ENCODE measurements at regions of chr20 and their contacts with region 1.

Region 1: DNA sequence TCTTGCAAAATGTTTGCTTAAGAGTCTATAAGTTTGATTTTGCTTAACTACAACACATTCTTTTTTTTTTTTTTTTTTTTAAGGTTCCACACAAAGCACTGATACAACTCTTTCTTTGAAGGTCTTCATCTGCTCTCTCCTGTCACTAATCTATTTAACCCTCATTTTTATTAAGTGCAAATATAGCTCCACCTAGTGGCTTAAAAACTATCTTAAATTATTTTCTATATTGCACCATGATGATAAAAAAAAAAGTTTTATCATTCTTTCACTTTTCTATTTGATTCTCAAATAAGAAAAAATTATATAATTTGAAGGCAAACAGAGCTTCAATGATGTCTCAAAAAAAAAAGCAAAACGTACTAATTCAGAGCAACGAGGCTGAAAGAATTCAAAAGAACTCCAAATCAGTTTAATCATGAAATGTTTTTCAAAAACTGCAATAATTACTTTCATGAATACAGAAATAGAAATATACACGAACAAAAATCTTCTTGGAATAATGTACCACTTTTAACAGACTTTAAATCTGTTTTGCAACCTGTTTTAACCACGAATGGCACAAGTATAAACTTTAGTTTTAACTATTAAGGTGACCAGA is 12.8 kb downstream of the ESF1 start:
- DNase-seq: no peak
- ATAC-seq: no peak

Region 2: DNA sequence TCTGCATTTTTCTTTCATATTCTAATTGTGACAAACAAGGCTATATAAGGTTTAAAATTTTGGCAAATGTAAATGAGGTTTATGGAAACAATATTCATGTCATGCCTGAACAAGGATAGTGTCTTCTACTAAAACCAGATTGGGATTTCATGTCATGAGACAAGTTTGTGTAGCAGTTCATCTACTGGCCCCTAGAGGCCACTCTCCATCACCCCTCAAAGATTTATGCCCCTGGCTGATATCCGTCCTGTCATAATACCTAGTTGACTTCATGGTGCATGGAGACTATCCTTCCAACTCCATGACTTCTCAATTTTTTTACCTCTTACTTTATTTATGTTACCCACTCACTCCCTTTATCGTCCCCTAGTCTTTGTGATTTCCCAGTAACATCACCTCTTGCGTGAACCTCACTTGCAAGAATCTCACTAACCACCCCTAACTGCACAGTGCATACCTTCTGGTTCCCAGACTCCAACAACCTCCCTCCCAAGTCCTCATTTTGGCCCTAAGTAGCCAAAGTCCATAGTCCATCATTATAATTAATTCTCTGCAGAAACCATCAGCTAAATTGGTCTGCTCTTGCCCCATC is 313.0 kb before region 1 on chr20:
- intact Hi-C with region 1: loop called (anchors 5 kb)
- DNase-seq: no peak
- ATAC-seq: peak; percentile 41